ENCODE measurements at regions of chr13 and their contacts with region 1.

Region 1: GRCh38 chr13:110233181-110233950 is 73.6 kb downstream of the COL4A1 start:
- DNase-seq: no peak
- ATAC-seq: peak; percentile 5 to 32
- H3K4me3 ChIP-seq: peak overlapping the region; percentile 10
- H3K27ac ChIP-seq: peak overlapping the region; percentile 60
- H3K4me1 ChIP-seq: peaks cover 31% of the 10 kb centered on the region
- H3K27me3 ChIP-seq: no peaks in the 10 kb centered on the region
- CTCF ChIP-seq: no peak

Region 2: DNA sequence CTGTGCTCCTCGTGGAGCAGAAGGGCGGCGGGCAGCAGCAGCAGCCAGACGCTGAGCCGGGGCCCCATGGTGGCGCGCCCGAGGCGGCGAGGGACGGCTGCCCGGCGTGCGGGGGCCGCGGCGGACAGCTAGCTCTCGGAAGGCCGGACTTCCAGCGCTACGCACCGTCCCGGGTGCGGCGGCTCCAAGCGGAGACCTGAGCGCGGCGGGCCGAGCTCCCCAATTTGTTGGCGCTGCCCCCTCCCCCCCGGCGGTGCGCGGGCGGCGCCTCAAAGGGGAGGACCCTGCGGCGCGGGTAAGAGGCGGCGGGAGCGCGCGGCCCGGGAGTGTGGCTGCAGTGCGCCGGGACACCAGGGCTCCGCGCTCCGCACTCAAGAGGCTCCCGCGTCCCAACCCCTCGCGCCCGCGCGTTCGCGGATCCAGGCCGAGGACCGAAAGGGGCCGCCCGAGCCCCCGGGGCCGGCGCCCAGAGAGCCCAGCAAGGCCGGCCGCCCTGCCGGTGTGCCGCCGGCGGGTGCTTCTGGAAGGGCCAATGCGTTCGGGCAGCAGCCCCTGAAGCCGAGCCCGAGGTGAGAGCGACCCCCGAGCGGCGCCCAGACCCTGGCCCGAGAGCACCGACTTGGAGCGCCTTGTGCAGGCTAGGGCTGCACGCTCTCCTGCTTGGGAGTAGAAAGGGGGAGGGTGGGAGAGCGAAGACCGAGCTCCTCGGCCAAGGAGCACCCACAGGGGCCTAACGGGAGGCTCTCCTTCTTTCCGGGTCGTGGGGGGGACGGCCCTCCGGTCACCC is 73.8 kb after region 1 on chr13 and contains the starts of genes COL4A1 and COL4A2:
- intact Hi-C with region 1: loop called (anchors 10 kb)
- DNase-seq: peak; percentile 68
- ATAC-seq: peak; percentile 87 to 90
- H3K4me3 ChIP-seq: peak within 1 kb of the TSS; percentile 78
- H3K27ac ChIP-seq: peak within 1 kb of the TSS; percentile 93
- H3K4me1 ChIP-seq: peaks cover 30% of the 10 kb centered on the region
- H3K27me3 ChIP-seq: peaks cover 20% of the 10 kb centered on the region
- CTCF ChIP-seq: no peak
- total RNA-seq, gene COL4A1: 161 TPM
- total RNA-seq, gene COL4A2: 185 TPM